Transverse colon (tissue), 4 donors: ENCODE measurements at regions of chr2 and their contacts with region 1.

Region 1: GRCh38 chr2:70086838-70087701 is at the start of gene PCBP1:
- DNase-seq: peak; percentile 97
- H3K4me3 ChIP-seq: peak within 1 kb of the TSS; percentile 74 to 88 (median 80)
- H3K27ac ChIP-seq: peak within 1 kb of the TSS; percentile 97 to 100 (median 98)
- H3K4me1 ChIP-seq: peaks cover 28 to 58% (median 43%) of the 10 kb centered on the region in 4 donors
- H3K27me3 ChIP-seq: no peaks in the 10 kb centered on the region
- CTCF ChIP-seq: no peak
- EP300 ChIP-seq: no peak
- POLR2A ChIP-seq: peak; percentile 91
- total RNA-seq, gene PCBP1: 103 to 189 (median 149) TPM

Region 2: DNA sequence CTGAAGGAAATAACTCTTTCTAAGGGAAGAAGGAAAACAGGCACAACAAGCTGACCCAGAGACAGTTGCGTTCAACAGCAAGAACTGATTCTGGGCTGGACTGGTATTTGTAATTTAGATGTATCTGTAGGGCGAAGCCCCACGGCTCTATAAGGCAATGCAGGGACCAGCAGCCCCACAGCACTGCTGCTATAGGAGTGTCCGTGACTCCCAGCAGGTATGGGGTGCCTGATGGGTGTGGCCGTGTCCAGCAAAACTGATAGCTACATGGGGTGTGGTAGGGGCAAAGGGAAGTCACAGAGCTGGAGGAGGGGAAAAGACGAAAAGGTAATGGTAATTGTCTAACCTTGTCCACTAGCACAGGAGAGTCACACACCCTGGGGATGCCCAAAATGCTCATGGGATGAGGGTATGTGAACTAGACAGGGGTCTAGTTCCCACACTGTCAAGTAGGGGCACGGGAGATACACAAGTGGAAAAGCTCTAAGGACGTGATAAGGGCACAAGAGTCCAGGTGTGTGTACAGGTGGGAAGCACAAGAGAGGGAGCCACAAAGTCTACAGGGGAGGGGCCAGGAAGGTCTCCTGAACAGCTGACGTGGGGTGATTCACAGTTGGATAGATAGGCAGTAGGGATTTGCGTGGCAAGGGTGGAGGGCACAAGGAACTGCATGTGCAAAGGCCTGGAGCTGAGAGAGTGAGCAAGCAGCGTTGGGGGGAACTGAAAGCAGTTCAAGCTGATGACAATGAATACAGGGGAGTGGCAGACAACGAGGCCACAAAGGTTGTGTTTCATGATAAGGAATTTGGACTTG is 77.1 kb before region 1 on chr2:
- in situ Hi-C with region 1: no loop called
- intact Hi-C with region 1: no loop called
- DNase-seq: peak; percentile 78
- H3K4me3 ChIP-seq: no peak overlapping the region
- H3K27ac ChIP-seq: peak overlapping the region; percentile 76 to 80 (median 79)
- H3K4me1 ChIP-seq: peaks cover 4 to 15% (median 9%) of the 10 kb centered on the region in 4 donors
- H3K27me3 ChIP-seq: no peaks in the 10 kb centered on the region
- CTCF ChIP-seq: no peak
- EP300 ChIP-seq: peak; percentile 36
- POLR2A ChIP-seq: peak; percentile 55

Region 3: GRCh38 chr2:70132244-70133126 is 45.4 kb after region 1 on chr2:
- in situ Hi-C with region 1: loop called in 1 of 4 experiments (anchors 10 kb)
- intact Hi-C with region 1: no loop called
- DNase-seq: peak; percentile 47
- H3K4me3 ChIP-seq: peak overlapping the region in 3 of 4 donors; percentile 15 to 48 (median 23)
- H3K27ac ChIP-seq: peak overlapping the region; percentile 85 to 94 (median 92)
- H3K4me1 ChIP-seq: peaks cover 6 to 54% (median 25%) of the 10 kb centered on the region in 4 donors
- H3K27me3 ChIP-seq: no peaks in the 10 kb centered on the region
- CTCF ChIP-seq: no peak
- EP300 ChIP-seq: no peak
- POLR2A ChIP-seq: peak; percentile 52